Right ventricle myocardium inferior (tissue), 1 donor: ENCODE measurements at regions of chr22 and their contacts with region 1.

Region 1: GRCh38 chr22:37807410-37808293 is at the start of gene GCAT:
- DNase-seq: peak; percentile 98
- ATAC-seq: peak; percentile 92
- total RNA-seq, gene GCAT: 44.1 TPM

Region 2: GRCh38 chr22:37843741-37843990 is 36.0 kb after region 1 on chr22:
- intact Hi-C with region 1: loop called (anchors 5 kb)
- DNase-seq: peak; percentile 79
- ATAC-seq: peak; percentile 30

Region 3: GRCh38 chr22:38080850-38081635 is 273.4 kb after region 1 on chr22:
- intact Hi-C with region 1: no loop called
- DNase-seq: no peak
- ATAC-seq: peak; percentile 72